ENCODE measurements at regions of chr6 and their contacts with region 1.

Region 1: DNA sequence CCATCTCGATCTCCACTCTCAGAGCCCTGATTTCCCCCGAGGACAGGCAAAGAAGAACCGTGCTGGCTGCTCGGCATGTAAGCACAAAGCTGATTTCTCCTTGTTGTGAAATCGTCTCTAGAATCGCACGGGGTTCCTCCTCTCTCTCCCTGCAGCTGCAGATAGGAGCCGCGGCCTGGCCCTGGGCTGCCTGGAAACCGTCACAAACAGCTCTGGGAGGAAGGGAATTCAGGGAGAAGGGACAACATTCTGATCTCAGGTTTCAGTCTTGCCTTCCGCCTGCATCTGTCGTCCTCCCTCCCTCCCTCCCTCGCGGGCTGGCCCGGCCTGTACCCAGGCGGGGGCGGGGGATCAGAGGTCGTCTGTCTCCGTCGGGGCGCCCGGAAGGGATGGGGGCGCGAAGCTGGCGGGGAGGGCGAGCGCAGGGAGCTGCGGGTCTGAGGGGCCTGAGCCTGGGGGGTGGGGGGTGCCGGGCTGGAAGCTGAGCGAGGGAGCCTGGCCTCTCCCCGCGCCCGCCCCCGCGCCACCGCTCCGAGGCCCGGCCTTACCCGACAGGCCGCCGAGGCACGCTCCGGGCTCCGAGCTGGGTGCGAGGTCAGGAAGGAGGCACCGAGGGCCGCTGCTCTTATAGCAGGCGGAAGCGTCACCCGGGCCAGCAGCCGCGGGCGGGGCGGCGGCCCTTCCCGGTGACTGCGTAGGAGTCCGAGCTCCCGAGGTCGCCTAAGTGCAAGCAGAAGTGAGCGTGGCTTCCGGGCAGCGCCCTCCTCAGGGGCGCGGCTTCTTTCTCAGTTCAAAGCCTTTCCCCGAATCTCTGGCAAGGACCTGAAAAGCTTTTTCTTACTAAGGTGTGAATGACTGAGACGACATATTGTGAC is at the start of gene SERPINB1:
- DNase-seq: peak; percentile 38 to 81 (median 63)
- H3K4me3 ChIP-seq: peak within 1 kb of the TSS; percentile 40 to 77 (median 67)
- H3K27ac ChIP-seq: peak within 1 kb of the TSS; percentile 63 to 96 (median 90)
- H3K27me3 ChIP-seq: no peaks in the 10 kb centered on the region
- CTCF ChIP-seq: peak in 43 of 56 donors; percentile 12 to 62 (median 36)
- total RNA-seq, gene SERPINB1: 5.2 to 34.5 (median 12.1) TPM

Region 2: GRCh38 chr6:2738373-2738979 is 103.0 kb before region 1 on chr6:
- intact Hi-C with region 1: loop called in 1 of 2 experiments (anchors 10 kb)
- DNase-seq: peak in 8 of 10 donors; percentile 40 to 76 (median 56)
- H3K4me3 ChIP-seq: no peak overlapping the region
- H3K27ac ChIP-seq: no peak overlapping the region
- H3K27me3 ChIP-seq: no peaks in the 10 kb centered on the region
- CTCF ChIP-seq: peak; percentile 36 to 90 (median 76)

Region 3: DNA sequence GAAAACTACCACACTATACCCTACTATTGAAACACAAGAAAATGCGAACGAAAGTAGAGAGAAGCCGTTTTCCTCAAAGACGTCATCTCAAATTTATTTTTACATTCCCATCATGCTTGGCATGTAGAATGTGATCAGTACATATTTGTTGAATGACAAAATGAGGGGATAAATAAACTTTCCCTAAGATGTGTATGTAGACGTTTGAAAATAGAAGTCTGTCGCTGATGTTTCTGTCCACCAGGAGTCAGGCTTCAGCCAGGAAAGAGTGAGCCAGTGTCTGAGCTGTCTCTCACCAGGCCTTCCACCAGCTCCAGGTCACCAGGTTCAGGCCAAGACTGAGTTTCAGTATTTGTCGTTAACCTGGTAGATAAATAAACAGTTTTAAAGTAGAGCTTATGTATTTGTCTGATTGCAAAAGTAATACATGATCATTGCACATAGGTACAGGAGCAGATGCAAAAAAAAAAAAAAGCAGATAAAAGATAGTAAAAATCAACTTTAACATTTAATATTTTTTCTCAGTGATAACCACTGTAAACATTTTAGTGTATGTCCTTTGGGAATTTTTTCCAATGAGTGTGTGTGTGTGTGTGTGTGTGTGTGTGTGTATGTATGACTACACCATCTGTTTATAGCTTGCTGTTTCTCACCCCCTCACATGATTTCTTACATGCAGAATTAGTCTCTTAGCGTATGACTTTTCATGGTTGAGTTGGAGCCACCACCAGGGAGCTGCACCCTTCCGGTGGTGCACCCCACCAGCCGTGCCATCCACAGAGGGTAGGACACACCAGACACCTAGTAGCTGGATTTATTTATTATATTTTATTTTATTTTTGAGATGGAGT is 50.2 kb before region 1 on chr6:
- intact Hi-C with region 1: loop called in 1 of 2 experiments (anchors 5 kb)
- DNase-seq: peak in 8 of 10 donors; percentile 46 to 78 (median 70)
- H3K4me3 ChIP-seq: peak overlapping the region in 1 of 59 donors; percentile 14
- H3K27ac ChIP-seq: peak overlapping the region in 51 of 59 donors; percentile 18 to 82 (median 56)
- H3K27me3 ChIP-seq: no peaks in the 10 kb centered on the region
- CTCF ChIP-seq: peak; percentile 60 to 90 (median 76)

Region 4: GRCh38 chr6:2799936-2800527 is 41.5 kb before region 1 on chr6:
- intact Hi-C with region 1: loop called in 1 of 2 experiments (anchors 5 kb)
- DNase-seq: no peak
- H3K4me3 ChIP-seq: no peak overlapping the region
- H3K27ac ChIP-seq: no peak overlapping the region
- H3K27me3 ChIP-seq: no peaks in the 10 kb centered on the region
- CTCF ChIP-seq: no peak

Region 5: GRCh38 chr6:3068329-3069214 is 227.1 kb after region 1 on chr6 and contains the start of gene RIPK1:
- intact Hi-C with region 1: loop called in 1 of 2 experiments (anchors 5 kb)
- DNase-seq: peak; percentile 85 to 96 (median 92)
- H3K4me3 ChIP-seq: peak within 1 kb of the TSS; percentile 68 to 98 (median 89)
- H3K27ac ChIP-seq: peak within 1 kb of the TSS; percentile 94 to 100 (median 99)
- H3K27me3 ChIP-seq: no peaks in the 10 kb centered on the region
- CTCF ChIP-seq: peak in 55 of 56 donors; percentile 34 to 80 (median 64)
- total RNA-seq, gene RIPK1: 6.5 to 17.9 (median 11.1) TPM

Measured in dorsolateral prefrontal cortex (tissue), 120 donors.